ENCODE measurements at regions of chr5 and their contacts with region 1.

Region 1: GRCh38 chr5:172479044-172479783 is 24.9 kb upstream of the SH3PXD2B start:
- DNase-seq: peak; percentile 24
- H3K4me3 ChIP-seq: no peak overlapping the region
- H3K27me3 ChIP-seq: no peaks in the 10 kb centered on the region; the same call in none of the 2 replicates
- CTCF ChIP-seq: peak; percentile 87

Region 2: GRCh38 chr5:172490514-172491461 is 11.6 kb after region 1 on chr5:
- CTCF ChIA-PET with region 1: interaction called, 14 read pairs
- POLR2A ChIA-PET with region 1: no interaction called
- DNase-seq: no peak
- H3K4me3 ChIP-seq: no peak overlapping the region
- H3K27me3 ChIP-seq: peaks cover 17% of the 10 kb centered on the region
- CTCF ChIP-seq: no peak

Region 3: GRCh38 chr5:172607213-172607793 is 128.1 kb after region 1 on chr5:
- CTCF ChIA-PET with region 1: no interaction called
- POLR2A ChIA-PET with region 1: no interaction called
- DNase-seq: no peak
- H3K4me3 ChIP-seq: no peak overlapping the region
- H3K27me3 ChIP-seq: peaks cover 6% of the 10 kb centered on the region; the same call in 1 of the 2 replicates
- CTCF ChIP-seq: no peak

Region 4: DNA sequence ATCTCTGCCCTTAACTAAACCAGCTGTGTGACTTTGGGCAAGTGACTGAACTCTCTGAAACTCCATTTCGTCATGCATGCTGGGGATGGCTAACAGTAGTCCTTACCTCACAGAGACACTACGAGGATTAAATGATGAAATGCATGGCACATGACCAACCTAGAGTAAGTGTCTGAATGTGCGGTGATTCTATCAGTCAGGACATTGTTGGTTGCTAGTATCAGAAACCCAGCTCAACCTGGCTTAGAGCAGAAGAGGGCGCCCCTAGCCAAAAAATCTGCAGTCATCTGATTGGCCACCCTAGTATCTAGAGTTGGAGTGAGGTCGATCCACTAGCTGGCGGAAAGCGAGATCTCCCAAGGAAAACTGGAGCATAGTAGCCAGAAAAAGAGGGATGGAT is 187.0 kb after region 1 on chr5:
- CTCF ChIA-PET with region 1: interaction called, 3 read pairs
- POLR2A ChIA-PET with region 1: interaction called, 11 read pairs
- DNase-seq: no peak
- H3K4me3 ChIP-seq: no peak overlapping the region
- H3K27me3 ChIP-seq: no peaks in the 10 kb centered on the region
- CTCF ChIP-seq: no peak

Measured in BJ (cell line).